ENCODE measurements at regions of chr13 and their contacts with region 1.

Region 1: GRCh38 chr13:99269627-99270241 is 11.6 kb upstream of the GPR18 start:
- DNase-seq: peak; percentile 17
- H3K4me3 ChIP-seq: no peak overlapping the region; a peak in 1 of 4 replicates
- H3K27ac ChIP-seq: no peak overlapping the region
- H3K4me1 ChIP-seq: no peaks in the 10 kb centered on the region
- H3K27me3 ChIP-seq: no peaks in the 10 kb centered on the region
- CTCF ChIP-seq: peak; percentile 90
- EP300 ChIP-seq: no peak
- RAD21 ChIP-seq: peak; percentile 85

Region 2: DNA sequence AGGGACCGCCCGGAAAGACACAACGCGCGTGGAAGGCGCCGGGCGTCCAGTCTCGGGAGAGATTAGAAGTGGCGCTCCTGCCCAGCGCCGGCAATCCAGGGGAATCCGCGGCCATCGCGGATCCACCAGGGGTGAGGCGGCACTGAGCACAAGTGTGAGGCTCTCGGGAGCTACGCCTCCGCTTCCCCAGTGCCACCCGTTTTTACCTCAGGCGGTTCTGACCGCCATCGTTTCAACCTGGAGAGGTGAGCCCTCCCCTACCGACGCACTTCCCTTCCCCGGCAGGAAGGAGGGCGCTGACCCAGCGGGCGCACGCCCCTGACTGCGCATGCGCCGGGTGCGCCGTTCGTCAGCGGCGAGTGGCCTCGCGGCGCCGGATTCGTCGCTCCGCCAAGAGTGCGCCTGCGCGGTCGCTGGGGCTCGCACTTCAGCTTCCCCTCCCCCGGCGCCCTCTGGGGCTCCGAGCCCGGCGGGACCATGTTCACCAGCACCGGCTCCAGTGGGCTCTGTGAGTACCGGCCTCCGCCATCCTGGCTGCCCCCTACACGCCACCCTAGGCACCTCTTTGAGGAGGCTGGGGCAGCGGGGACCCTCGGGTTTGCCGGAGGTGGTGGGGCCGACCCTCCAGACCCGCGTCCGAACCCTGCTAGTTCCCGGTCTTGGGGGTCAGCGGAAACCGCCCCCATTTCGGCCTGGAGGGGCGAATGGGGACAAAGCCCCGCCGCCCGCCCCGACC is 69.1 kb before region 1 on chr13 and contains the start of gene UBAC2:
- CTCF ChIA-PET with region 1: interaction called, 44 read pairs
- POLR2A ChIA-PET with region 1: interaction called, 3 read pairs
- DNase-seq: peak; percentile 99
- H3K4me3 ChIP-seq: peak within 1 kb of the TSS; percentile 95 to 98
- H3K27ac ChIP-seq: peak within 1 kb of the TSS; percentile 88 to 89
- H3K4me1 ChIP-seq: peaks cover 0 to 6% of the 10 kb centered on the region in 2 experiments; a peak in 2 of 4 replicates
- H3K27me3 ChIP-seq: no peaks in the 10 kb centered on the region
- CTCF ChIP-seq: peak; percentile 10; the same call in 1 of the 2 replicates
- EP300 ChIP-seq: no peak
- RAD21 ChIP-seq: no peak
- polyA plus RNA-seq, gene UBAC2: 79.0 and 97.4 TPM in 2 replicates

Region 3: DNA sequence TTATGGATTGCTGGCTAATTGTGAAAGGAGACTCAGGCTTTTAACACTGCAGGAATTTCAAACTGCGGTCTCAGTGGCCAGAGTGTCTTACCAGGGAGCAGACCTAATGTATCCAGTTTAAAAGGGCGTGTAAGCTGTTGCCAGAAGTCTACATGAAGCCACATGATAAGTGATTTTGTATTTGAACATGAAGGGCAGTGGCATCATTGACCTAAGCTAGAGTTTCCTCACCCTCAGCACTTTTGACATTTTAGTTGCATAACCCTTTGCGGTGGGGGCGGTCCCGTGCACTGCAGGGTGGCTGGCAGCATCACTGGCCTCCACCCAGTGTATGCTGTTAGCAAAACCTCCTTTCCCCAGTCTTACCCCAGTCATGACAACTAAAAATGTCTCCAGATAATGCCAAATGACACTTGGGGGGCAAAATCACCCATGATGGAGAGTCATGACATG is 12.1 kb after region 1 on chr13:
- CTCF ChIA-PET with region 1: interaction called, 25 read pairs
- POLR2A ChIA-PET with region 1: no interaction called
- DNase-seq: no peak
- H3K4me3 ChIP-seq: no peak overlapping the region
- H3K27ac ChIP-seq: peak overlapping the region in 1 of 2 experiments; percentile 60; a peak in 1 of 4 replicates
- H3K4me1 ChIP-seq: peaks cover 6 to 7% of the 10 kb centered on the region in 2 experiments; a peak in 3 of 4 replicates
- H3K27me3 ChIP-seq: no peaks in the 10 kb centered on the region
- CTCF ChIP-seq: no peak
- EP300 ChIP-seq: no peak
- RAD21 ChIP-seq: no peak

Region 4: GRCh38 chr13:99386911-99387788 is 117.4 kb after region 1 on chr13:
- CTCF ChIA-PET with region 1: interaction called, 16 read pairs
- POLR2A ChIA-PET with region 1: no interaction called
- DNase-seq: peak; percentile 58
- H3K4me3 ChIP-seq: no peak overlapping the region; a peak in 1 of 4 replicates
- H3K27ac ChIP-seq: no peak overlapping the region
- H3K4me1 ChIP-seq: peaks cover 0 to 5% of the 10 kb centered on the region in 2 experiments; a peak in 1 of 4 replicates
- H3K27me3 ChIP-seq: no peaks in the 10 kb centered on the region
- CTCF ChIP-seq: peak; percentile 76
- EP300 ChIP-seq: no peak
- RAD21 ChIP-seq: peak; percentile 31

Region 5: GRCh38 chr13:99467764-99468163 is 198.0 kb after region 1 on chr13:
- CTCF ChIA-PET with region 1: interaction called, 10 read pairs
- POLR2A ChIA-PET with region 1: no interaction called
- DNase-seq: no peak
- H3K4me3 ChIP-seq: no peak overlapping the region
- H3K27ac ChIP-seq: no peak overlapping the region; a peak in 1 of 4 replicates
- H3K4me1 ChIP-seq: no peaks in the 10 kb centered on the region; a peak in 1 of 4 replicates
- H3K27me3 ChIP-seq: no peaks in the 10 kb centered on the region
- CTCF ChIP-seq: no peak
- EP300 ChIP-seq: no peak
- RAD21 ChIP-seq: no peak